Caco-2 (cell line): ENCODE measurements at regions of chr20 and their contacts with region 1.

Region 1: DNA sequence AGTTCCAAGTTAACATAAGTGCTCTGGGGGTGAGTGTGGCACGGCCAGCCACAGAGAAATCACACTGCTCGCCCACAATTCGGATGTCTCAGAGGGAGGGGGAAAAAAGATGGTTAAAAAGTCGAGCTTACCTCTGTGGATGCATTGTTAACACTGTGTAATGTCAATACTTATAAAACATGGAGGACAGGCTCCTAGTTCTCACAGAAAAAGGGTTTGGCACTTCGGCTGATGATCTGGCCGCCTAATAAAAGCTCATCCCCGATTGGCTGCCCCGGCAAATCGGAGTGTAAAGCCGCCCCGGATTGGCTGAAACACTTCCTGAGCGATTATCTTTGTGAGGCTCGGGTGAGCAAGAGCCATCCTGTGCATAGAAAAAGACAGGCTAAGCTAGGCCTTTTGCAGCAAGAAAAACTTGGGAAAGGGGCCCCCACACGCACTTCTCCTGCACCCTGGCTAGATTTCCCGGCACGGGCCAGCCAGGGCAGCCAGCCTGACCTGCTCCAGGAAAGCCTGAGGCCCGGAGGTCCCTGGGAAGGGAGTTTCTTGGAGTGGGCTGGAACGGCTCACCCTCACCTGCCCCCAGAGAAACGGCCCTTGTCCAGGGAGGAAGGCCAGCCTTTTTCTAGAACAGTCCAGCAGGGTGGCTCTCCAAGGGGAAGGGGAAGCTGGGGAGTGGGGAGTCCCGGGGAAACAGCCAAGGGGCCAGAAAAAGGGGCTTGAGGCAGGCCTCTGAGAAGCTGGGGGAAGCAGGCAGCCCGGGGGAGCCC is at the start of gene ZMYND8:
- DNase-seq: peak; percentile 98 to 100
- H3K4me3 ChIP-seq: peak within 1 kb of the TSS; percentile 40
- H3K4me3 Mint-ChIP-seq: peak within 1 kb of the TSS; percentile 95
- H3K27ac Mint-ChIP-seq: peak within 1 kb of the TSS; percentile 100
- H3K4me1 ChIP-seq: peaks cover 68% of the 10 kb centered on the region
- H3K4me1 Mint-ChIP-seq: peaks cover 73% of the 10 kb centered on the region
- H3K27me3 ChIP-seq: no peaks in the 10 kb centered on the region
- H3K27me3 Mint-ChIP-seq: no peaks in the 10 kb centered on the region
- CTCF ChIP-seq: no peak
- total RNA-seq, gene ZMYND8: 180 and 194 TPM in 2 replicates

Region 2: GRCh38 chr20:47247972-47248371 is 108.7 kb before region 1 on chr20:
- CTCF ChIA-PET with region 1: no interaction called
- POLR2A ChIA-PET with region 1: no interaction called
- intact Hi-C with region 1: no loop called
- DNase-seq: no peak
- H3K4me3 ChIP-seq: no peak overlapping the region
- H3K4me3 Mint-ChIP-seq: no peak overlapping the region
- H3K27ac Mint-ChIP-seq: no peak overlapping the region
- H3K4me1 ChIP-seq: no peaks in the 10 kb centered on the region
- H3K4me1 Mint-ChIP-seq: no peaks in the 10 kb centered on the region
- H3K27me3 ChIP-seq: no peaks in the 10 kb centered on the region
- H3K27me3 Mint-ChIP-seq: no peaks in the 10 kb centered on the region
- CTCF ChIP-seq: no peak

Region 3: DNA sequence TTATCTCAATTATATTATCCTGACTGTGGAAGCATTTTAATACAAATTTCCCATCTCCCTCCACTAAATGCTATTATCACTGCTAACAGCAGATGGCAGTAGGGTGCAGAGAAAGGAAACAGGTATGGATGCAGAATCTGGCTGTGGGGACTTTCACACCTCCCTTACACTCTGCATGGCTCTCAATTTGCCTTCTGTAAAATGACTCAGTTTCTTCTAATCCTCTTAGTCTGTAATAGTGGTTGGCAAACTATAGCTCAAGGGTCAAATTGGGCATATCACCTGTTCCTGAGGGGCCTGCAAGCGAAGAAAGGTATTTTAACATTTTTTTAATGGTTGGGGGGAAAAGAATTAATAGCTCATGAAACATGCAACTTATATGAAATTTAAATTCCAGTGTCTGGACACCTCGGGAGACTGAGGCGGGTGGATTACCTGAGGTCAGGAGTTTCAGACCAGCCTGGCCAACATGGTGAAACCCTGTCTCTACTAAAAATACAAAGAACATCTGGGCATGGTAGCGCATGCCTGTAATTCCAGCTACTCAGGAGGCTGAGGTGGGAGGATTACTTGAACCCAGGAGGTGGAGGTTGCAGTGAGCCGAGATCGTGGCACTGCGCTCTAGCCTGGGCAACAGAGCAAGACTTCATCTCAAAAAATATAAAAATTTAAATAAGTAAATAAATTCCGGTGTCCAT is 83.7 kb before region 1 on chr20:
- CTCF ChIA-PET with region 1: interaction called, 47 read pairs
- POLR2A ChIA-PET with region 1: interaction called, 16 read pairs
- intact Hi-C with region 1: loop called (anchors 1 kb)
- DNase-seq: peak; percentile 72 to 89
- H3K4me3 ChIP-seq: no peak overlapping the region
- H3K4me3 Mint-ChIP-seq: no peak overlapping the region
- H3K27ac Mint-ChIP-seq: peak overlapping the region; percentile 11
- H3K4me1 ChIP-seq: peaks cover 7% of the 10 kb centered on the region
- H3K4me1 Mint-ChIP-seq: peaks cover 16% of the 10 kb centered on the region
- H3K27me3 ChIP-seq: no peaks in the 10 kb centered on the region
- H3K27me3 Mint-ChIP-seq: no peaks in the 10 kb centered on the region
- CTCF ChIP-seq: peak; percentile 98

Region 4: GRCh38 chr20:47304287-47304686 is 52.4 kb before region 1 on chr20:
- CTCF ChIA-PET with region 1: interaction called, 18 read pairs
- POLR2A ChIA-PET with region 1: interaction called, 15 read pairs
- intact Hi-C with region 1: no loop called
- DNase-seq: peak; percentile 63 to 71
- H3K4me3 ChIP-seq: no peak overlapping the region
- H3K4me3 Mint-ChIP-seq: no peak overlapping the region
- H3K27ac Mint-ChIP-seq: peak overlapping the region; percentile 77
- H3K4me1 ChIP-seq: peaks cover 23% of the 10 kb centered on the region
- H3K4me1 Mint-ChIP-seq: peaks cover 31% of the 10 kb centered on the region
- H3K27me3 ChIP-seq: no peaks in the 10 kb centered on the region
- H3K27me3 Mint-ChIP-seq: no peaks in the 10 kb centered on the region
- CTCF ChIP-seq: peak; percentile 38 to 57

Region 5: GRCh38 chr20:47330933-47331864 is 25.5 kb before region 1 on chr20:
- CTCF ChIA-PET with region 1: interaction called, 6 read pairs
- POLR2A ChIA-PET with region 1: interaction called, 15 read pairs
- intact Hi-C with region 1: no loop called
- DNase-seq: no peak
- H3K4me3 ChIP-seq: no peak overlapping the region
- H3K4me3 Mint-ChIP-seq: peak overlapping the region; percentile 0
- H3K27ac Mint-ChIP-seq: peak overlapping the region; percentile 39
- H3K4me1 ChIP-seq: peaks cover 66% of the 10 kb centered on the region
- H3K4me1 Mint-ChIP-seq: peaks cover 50% of the 10 kb centered on the region
- H3K27me3 ChIP-seq: no peaks in the 10 kb centered on the region
- H3K27me3 Mint-ChIP-seq: no peaks in the 10 kb centered on the region
- CTCF ChIP-seq: no peak

Region 6: DNA sequence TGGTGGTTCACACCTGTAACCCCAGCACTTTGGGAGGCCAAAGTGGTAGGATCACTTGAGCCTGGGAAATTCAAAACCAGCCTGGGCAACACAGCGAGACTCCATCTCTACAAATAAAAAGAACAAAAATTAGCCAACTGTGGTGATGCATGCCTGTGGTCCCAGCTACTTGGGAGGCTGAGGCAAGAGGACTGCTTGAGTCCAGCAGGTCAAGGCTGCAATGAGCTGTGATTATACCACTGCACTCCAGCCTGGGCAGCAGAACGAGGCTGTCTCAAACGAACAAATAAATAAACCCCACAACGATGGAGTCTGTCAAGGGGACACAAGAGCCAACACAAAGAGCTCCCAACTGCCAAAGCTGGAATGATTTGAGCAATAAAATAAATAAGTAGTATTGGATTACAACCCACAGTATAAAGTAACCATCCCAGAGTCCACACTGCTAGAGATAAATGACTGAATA is 13.7 kb before region 1 on chr20:
- CTCF ChIA-PET with region 1: interaction called, 5 read pairs
- POLR2A ChIA-PET with region 1: interaction called, 39 read pairs
- intact Hi-C with region 1: loop called (anchors 1 kb)
- DNase-seq: no peak
- H3K4me3 ChIP-seq: no peak overlapping the region
- H3K4me3 Mint-ChIP-seq: no peak overlapping the region
- H3K27ac Mint-ChIP-seq: peak overlapping the region; percentile 8
- H3K4me1 ChIP-seq: peaks cover 44% of the 10 kb centered on the region
- H3K4me1 Mint-ChIP-seq: peaks cover 54% of the 10 kb centered on the region
- H3K27me3 ChIP-seq: no peaks in the 10 kb centered on the region
- H3K27me3 Mint-ChIP-seq: no peaks in the 10 kb centered on the region
- CTCF ChIP-seq: no peak

Region 7: GRCh38 chr20:47438577-47439381 is 82.1 kb after region 1 on chr20:
- CTCF ChIA-PET with region 1: interaction called, 4 read pairs
- POLR2A ChIA-PET with region 1: interaction called, 12 read pairs
- intact Hi-C with region 1: no loop called
- DNase-seq: peak; percentile 92 to 96
- H3K4me3 ChIP-seq: peak overlapping the region; percentile 2; the same call in 1 of the 2 replicates
- H3K4me3 Mint-ChIP-seq: peak overlapping the region; percentile 64
- H3K27ac Mint-ChIP-seq: peak overlapping the region; percentile 91
- H3K4me1 ChIP-seq: peaks cover 53% of the 10 kb centered on the region
- H3K4me1 Mint-ChIP-seq: peaks cover 28% of the 10 kb centered on the region
- H3K27me3 ChIP-seq: no peaks in the 10 kb centered on the region
- H3K27me3 Mint-ChIP-seq: no peaks in the 10 kb centered on the region
- CTCF ChIP-seq: no peak

Region 8: DNA sequence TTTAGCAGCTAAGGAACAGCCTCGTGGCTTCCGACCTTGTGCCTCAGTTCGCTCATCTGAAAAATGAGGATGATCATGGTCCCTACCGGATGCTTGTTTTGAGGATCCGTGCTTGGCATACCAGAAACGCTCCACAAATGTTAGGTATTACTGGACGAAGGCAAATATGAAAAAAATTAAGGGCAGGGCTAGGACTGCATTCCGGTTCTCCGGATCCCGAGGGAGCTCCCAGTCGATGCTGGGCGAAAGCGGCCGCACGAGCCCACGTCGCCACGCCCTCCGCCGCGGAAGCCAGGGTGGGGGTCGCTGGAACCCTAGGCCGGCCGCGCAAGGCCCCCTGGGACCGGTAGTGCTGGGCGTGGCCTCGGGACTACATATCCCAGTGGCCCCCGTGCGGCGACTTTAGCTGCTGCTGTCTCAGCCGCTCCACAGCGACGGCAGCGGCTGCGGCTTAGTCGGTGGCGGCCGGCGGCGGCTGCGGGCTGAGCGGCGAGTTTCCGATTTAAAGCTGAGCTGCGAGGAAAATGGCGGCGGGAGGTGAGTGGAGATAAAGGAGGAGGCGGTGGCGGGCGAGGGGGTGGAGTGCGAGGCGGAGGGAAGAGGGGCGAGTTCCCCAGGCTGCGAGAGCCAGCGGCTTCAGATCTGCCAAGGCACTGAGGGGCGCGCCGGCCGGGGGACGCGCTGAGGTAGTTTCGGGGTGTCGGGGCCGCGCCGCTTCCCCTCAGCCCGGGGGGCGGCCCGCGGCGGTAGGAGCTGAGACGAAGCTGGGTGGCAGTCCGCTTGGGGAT is 145.0 kb after region 1 on chr20 and contains the start of gene NCOA3:
- CTCF ChIA-PET with region 1: interaction called, 5 read pairs
- POLR2A ChIA-PET with region 1: interaction called, 61 read pairs
- intact Hi-C with region 1: no loop called
- DNase-seq: peak; percentile 100
- H3K4me3 ChIP-seq: peak within 1 kb of the TSS; percentile 98
- H3K4me3 Mint-ChIP-seq: peak within 1 kb of the TSS; percentile 82
- H3K27ac Mint-ChIP-seq: peak within 1 kb of the TSS; percentile 92
- H3K4me1 ChIP-seq: peaks cover 28% of the 10 kb centered on the region
- H3K4me1 Mint-ChIP-seq: peaks cover 35% of the 10 kb centered on the region
- H3K27me3 ChIP-seq: no peaks in the 10 kb centered on the region
- H3K27me3 Mint-ChIP-seq: no peaks in the 10 kb centered on the region
- CTCF ChIP-seq: peak; percentile 64 to 94
- total RNA-seq, gene NCOA3: 96.7 and 97.3 TPM in 2 replicates

Region 9: DNA sequence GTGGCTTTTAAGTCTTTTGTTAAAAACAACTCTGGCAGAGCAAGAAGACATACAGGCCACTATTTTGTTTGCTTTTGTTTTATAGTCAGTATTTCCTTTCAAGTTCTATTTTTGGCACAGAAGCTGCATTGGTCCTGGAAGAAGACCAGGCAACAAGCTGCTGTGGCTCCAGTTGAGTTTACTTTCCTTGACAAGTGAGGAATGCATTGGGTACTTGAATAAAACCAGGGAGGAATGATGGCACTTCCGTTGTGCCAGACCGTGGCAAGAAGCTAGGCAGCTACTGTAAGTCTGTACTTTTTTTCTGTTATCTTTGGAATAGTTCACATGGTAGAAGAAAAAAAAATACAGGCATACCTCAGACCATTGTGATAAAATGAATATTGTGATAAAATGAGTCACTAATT is 211.3 kb after region 1 on chr20:
- CTCF ChIA-PET with region 1: no interaction called
- POLR2A ChIA-PET with region 1: no interaction called
- intact Hi-C with region 1: no loop called
- DNase-seq: no peak
- H3K4me3 ChIP-seq: no peak overlapping the region
- H3K4me3 Mint-ChIP-seq: no peak overlapping the region
- H3K27ac Mint-ChIP-seq: peak overlapping the region; percentile 17
- H3K4me1 ChIP-seq: peaks cover 5% of the 10 kb centered on the region; the same call in 1 of the 2 replicates
- H3K4me1 Mint-ChIP-seq: peaks cover 11% of the 10 kb centered on the region
- H3K27me3 ChIP-seq: no peaks in the 10 kb centered on the region
- H3K27me3 Mint-ChIP-seq: no peaks in the 10 kb centered on the region
- CTCF ChIP-seq: no peak